Heart left ventricle (tissue), 16 donors: ENCODE measurements at regions of chrX and their contacts with region 1.

Region 1: GRCh38 chrX:45200741-45201234 is at the start of gene DIPK2B:
- DNase-seq: peak; percentile 51 to 70 (median 60)
- ATAC-seq: peak; percentile 84 to 93 (median 88)
- H3K4me3 ChIP-seq: peak within 1 kb of the TSS; percentile 9 to 58 (median 48)
- H3K27ac ChIP-seq: peak within 1 kb of the TSS; percentile 57 to 87 (median 75)
- H3K4me1 ChIP-seq: no peaks in the 10 kb centered on the region
- H3K27me3 ChIP-seq: peaks cover 0 to 31% (median 0%) of the 10 kb centered on the region in 9 donors
- CTCF ChIP-seq: no peak
- POLR2A ChIP-seq: peak in 1 of 2 donors; percentile 42
- total RNA-seq, gene DIPK2B: 9.8 to 42.0 (median 18.6) TPM

Region 2: DNA sequence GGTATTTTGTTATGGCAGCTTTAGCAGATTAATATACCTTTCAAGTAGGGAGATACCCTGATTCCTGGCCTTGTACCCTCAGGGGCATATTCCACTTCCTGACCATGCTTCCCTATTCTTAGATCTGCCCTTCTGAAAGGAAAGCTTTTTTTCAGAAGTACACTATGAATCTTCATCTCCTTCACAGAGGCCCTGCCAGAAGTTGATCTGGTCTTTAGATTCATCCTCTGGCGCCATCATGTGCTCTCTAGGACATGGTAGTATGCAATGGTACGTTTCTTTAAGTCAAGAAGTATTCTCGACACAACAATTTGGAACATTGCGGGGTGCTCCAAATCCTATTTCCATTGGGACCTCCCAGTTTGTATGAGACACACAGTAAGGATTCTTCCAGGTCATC is 39.5 kb after region 1 on chrX:
- intact Hi-C with region 1: no loop called
- DNase-seq: no peak
- ATAC-seq: no peak
- H3K4me3 ChIP-seq: no peak overlapping the region
- H3K27ac ChIP-seq: no peak overlapping the region
- H3K4me1 ChIP-seq: no peaks in the 10 kb centered on the region
- H3K27me3 ChIP-seq: no peaks in the 10 kb centered on the region
- CTCF ChIP-seq: peak in 1 of 12 donors; percentile 17
- POLR2A ChIP-seq: no peak

Region 3: GRCh38 chrX:45788941-45789348 is 588.2 kb after region 1 on chrX:
- intact Hi-C with region 1: loop called in 1 of 10 experiments (anchors 5 kb)
- DNase-seq: peak; percentile 60 to 77 (median 68)
- ATAC-seq: peak; percentile 85 to 99 (median 89)
- H3K4me3 ChIP-seq: no peak overlapping the region
- H3K27ac ChIP-seq: peak overlapping the region in 9 of 12 donors; percentile 23 to 67 (median 39)
- H3K4me1 ChIP-seq: peaks cover 0 to 7% (median 0%) of the 10 kb centered on the region in 12 donors
- H3K27me3 ChIP-seq: peaks cover 0 to 25% (median 0%) of the 10 kb centered on the region in 9 donors
- CTCF ChIP-seq: no peak
- POLR2A ChIP-seq: no peak